ENCODE measurements at regions of chr3 and their contacts with region 1.

Region 1: DNA sequence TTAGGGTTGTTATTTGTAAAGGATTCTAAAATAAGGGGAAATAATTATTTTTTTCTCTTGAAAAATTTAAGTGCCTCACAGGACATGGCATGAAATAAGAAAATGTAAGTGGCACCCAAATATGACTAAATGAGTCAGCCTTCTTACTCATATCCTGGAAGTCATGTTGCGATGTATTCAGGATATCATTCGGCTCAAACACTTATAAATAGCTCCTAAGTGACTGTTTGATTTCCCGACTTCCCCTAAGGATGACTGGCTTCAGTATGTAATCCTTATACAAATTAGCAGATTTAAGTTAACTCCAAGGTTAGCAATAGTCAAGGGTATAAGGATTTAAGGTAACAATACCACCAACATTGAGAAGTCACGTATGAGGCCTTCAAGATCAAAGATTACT is 57.3 kb upstream of the OSTN start:
- DNase-seq: peak; percentile 89
- H3K4me3 ChIP-seq: no peak overlapping the region
- H3K27ac ChIP-seq: peak overlapping the region; percentile 50
- H3K4me1 ChIP-seq: peaks cover 25% of the 10 kb centered on the region
- H3K27me3 ChIP-seq: no peaks in the 10 kb centered on the region
- CTCF ChIP-seq: no peak
- POLR2A ChIP-seq: no peak

Region 2: DNA sequence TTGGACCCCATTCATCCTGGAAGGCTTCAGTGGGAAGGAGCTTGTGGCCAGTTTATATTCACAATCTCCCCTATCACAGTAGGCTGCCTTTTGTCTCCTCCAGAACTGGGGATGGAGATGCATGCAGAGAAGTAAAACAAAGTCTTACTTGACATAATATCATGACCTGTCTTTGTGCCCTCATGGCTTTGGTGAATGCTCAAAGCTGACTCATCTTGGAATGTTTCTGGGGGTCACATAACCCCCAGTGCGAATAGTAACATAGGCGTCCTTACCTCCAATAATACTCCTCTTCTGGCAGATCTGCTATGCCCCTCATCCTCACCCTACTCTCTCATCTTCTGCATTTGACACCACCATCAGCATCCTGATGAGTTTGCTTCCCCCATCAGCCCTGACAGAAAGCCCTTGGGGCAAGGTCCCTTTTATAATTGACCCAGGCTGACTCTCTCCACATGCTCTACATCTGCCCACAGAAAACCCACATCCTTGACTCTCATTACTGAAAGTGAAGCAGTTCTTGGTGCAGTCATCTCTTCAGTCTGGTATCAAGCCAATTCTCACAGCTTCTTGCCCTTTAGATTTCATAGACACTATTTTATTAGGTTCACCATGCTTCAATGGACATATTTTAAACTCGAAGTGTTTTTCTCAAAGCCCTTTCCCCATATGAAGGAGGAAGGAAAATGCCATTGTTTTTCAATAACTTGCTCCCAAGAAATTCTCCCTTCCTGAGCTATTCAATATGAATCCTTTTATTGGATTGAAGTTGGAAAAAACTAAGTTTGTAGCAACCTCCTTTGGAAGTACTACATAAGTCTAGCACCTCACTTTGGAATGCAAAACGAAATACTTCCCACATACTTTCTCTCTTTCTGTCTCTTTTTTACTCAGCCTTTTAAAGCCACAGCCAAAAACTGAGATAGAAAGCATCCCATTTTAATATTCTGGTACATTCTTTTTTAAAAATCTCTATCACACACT is 93.9 kb after region 1 on chr3:
- CTCF ChIA-PET with region 1: no interaction called
- POLR2A ChIA-PET with region 1: no interaction called
- dilution Hi-C with region 1: no loop called
- intact Hi-C with region 1: loop called (anchors 1 kb)
- DNase-seq: no peak
- H3K4me3 ChIP-seq: no peak overlapping the region
- H3K27ac ChIP-seq: no peak overlapping the region
- H3K4me1 ChIP-seq: peaks cover 42% of the 10 kb centered on the region
- H3K27me3 ChIP-seq: no peaks in the 10 kb centered on the region
- CTCF ChIP-seq: no peak
- POLR2A ChIP-seq: no peak